AG04450 (cell line): ENCODE measurements at regions of chr20 and their contacts with region 1.

Region 1: GRCh38 chr20:49219089-49219923 is at the start of gene DDX27:
- DNase-seq: peak; percentile 98
- H3K4me3 ChIP-seq: peak within 1 kb of the TSS; percentile 98
- H3K27ac ChIP-seq: peak within 1 kb of the TSS; percentile 78
- H3K27me3 ChIP-seq: no peaks in the 10 kb centered on the region
- CTCF ChIP-seq: no peak
- polyA plus RNA-seq, gene DDX27: 31.3 and 32.0 TPM in 2 replicates

Region 2: DNA sequence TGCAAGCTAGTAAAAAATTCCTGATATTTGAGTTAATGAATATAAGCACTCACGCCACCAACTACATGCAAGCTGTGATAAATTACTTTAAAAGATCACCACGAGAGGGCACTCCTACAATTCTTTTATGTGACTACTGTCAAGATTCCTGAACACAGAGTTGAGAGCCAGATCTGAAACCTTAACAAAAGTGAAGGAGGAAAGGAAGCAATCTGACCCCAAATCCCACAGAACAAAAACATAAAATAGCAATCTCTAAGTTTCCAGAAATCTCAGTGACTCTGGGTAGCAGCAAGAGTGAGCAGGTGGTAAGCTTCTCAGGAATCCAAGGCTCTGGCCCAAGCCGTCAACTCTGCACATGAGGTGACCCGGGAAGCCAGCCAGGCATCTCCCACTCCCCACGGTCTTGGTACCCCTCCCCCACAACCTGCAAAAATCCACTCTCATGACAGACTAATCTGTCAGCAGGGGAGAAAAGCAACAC is 86.3 kb before region 1 on chr20:
- CTCF ChIA-PET with region 1: interaction called, 221 read pairs
- POLR2A ChIA-PET with region 1: interaction called, 3 read pairs
- DNase-seq: peak; percentile 50
- H3K4me3 ChIP-seq: no peak overlapping the region
- H3K27ac ChIP-seq: peak overlapping the region; percentile 47
- H3K27me3 ChIP-seq: no peaks in the 10 kb centered on the region
- CTCF ChIP-seq: peak; percentile 55

Region 3: DNA sequence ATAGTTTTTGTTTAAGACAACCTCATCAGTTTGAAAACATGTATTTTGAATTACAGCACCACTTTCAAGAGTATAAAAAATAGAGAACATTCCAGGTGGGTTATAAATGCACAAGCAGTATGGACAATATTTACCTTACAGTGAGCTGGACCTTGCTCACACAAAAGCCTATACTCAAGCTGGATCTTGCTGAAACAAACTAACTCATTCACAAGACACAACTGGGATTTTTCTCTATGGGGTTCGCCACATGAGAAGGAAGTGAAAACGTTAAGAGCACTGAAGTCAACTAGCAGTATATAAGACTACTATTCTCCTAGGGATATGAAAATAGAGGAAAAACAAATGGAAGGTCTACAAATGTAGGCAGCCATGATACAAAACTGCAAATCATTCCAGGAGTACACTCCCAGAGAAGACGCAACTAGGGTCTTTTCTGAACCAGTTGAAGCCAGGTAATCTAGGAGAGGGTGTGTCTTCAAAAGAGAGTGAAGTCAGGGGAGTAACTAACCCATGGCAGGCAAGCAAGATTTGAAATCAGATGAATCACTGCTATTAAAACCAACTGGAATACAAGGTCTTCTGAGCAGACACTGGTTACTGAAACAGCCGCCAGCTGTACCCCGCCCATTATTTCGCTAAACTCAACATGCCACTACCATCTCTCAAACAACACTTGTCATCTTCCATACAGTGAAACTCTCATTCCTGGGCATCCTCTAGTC is 57.7 kb before region 1 on chr20:
- CTCF ChIA-PET with region 1: interaction called, 29 read pairs
- POLR2A ChIA-PET with region 1: no interaction called
- DNase-seq: no peak
- H3K4me3 ChIP-seq: no peak overlapping the region
- H3K27ac ChIP-seq: no peak overlapping the region
- H3K27me3 ChIP-seq: no peaks in the 10 kb centered on the region
- CTCF ChIP-seq: no peak

Region 4: DNA sequence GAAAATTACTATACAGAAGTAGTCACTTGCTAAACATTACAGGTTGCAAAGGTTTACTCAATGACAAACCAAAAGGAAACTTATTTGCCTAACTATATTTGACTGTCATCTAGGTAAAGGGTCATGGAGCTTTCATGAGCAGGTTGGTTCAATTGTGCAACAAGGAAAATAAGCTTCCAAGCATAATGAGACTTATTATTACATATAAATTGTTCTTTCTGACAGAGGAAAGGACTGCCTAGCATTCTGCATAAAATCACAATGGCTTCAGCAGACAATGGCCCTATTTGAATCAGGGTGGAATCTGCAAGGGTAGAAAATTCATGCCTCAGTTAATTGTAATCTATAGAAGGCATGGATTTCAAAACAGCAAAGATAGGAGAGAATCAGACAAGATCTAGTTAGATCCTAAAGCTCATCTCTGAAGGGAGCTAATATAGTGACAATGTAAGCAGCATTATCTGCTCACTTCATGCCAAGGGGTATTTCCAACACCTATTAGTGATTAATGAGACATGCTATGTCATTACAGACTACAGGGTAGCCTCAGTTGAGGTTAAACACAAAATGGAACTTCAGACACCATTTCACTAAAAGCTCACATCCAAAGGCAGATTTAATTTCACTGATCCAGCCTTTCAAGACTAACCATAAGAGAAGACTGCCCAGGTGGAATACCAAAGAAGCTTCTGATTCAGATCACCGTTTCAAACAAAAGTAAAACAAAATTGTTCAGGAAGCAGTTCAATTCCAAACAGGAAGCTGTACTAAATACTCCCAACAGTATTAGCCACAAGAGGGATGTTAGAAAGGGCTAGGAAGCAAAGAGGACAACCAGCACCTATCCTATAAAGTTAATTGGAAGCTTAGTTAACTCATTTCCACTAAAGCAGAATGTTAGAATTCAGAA is 39.7 kb before region 1 on chr20:
- CTCF ChIA-PET with region 1: interaction called, 42 read pairs
- POLR2A ChIA-PET with region 1: no interaction called
- DNase-seq: no peak
- H3K4me3 ChIP-seq: no peak overlapping the region
- H3K27ac ChIP-seq: no peak overlapping the region
- H3K27me3 ChIP-seq: no peaks in the 10 kb centered on the region
- CTCF ChIP-seq: no peak

Region 5: GRCh38 chr20:49199729-49200293 is 19.5 kb before region 1 on chr20:
- CTCF ChIA-PET with region 1: interaction called, 36 read pairs
- POLR2A ChIA-PET with region 1: interaction called, 3 read pairs
- DNase-seq: no peak
- H3K4me3 ChIP-seq: no peak overlapping the region
- H3K27ac ChIP-seq: no peak overlapping the region
- H3K27me3 ChIP-seq: no peaks in the 10 kb centered on the region
- CTCF ChIP-seq: no peak